GM10248 (cell line): ENCODE measurements at regions of chr9 and their contacts with region 1.

Region 1: DNA sequence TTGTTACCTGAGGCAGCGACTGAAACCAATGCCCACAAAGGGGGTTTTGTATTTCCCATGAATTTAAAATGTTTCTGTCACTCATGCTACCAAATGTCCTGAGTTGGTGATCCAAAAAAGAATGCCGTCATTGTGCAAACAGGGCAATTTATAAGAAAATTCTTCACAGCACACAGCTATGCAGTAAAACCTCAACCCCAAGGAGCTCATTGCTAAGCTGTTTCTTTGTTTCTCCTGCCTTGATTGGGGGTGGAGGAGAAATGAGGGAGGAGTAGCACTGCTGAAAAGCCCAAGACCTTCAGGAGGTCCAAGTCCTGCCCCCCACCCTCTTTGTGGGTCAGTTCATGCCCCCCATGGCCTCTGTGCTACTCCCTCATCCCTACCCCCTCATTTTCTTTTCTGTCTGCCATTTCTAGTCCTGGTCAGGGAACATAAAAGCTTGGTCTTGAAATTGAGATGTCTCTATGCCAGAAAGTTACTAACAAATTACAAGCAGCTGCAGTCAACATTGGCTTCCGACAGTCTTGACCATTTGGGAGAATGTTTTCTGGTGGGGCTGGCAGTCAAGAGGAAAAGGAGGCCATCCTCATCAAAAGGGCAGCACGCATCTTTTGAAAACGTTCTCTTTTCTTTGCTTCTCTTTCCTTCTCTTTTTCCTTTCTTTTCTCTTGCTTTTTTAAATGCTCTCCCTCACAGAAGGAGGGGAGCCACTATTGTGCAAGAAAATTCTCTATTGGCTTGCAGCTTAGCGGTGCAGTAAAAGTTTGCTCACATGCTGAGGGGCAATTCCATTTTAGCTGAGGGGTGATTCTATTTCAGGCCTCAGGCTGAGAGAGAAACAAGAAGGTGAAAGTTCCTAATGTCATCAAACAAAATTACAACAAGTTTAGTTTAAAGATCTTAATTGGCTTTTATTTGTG is 133.4 kb downstream of the GCNT1 start:
- DNase-seq: no peak
- CTCF ChIP-seq: no peak

Region 2: DNA sequence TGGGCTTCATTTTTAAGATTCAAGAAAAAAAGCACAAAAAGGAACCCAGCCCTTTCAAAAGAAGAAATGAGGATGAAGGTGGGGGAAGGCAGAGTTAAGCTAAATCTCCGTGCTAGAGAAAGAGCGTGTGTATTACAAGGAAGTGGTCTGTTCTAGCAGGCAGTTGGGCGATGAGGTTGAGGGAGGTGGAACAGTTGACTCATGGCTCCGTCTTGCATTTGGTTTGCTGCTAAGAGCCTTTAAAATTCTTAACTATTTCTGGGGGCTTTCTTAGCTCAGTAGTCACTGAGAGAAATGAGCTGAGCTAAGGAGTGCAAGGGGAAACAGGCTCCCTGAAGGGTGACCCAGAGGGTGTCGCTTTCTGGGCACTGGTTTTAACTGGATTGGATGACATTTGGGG is 16.0 kb before region 1 on chr9:
- CTCF ChIA-PET with region 1: interaction called, 12 read pairs
- POLR2A ChIA-PET with region 1: no interaction called
- DNase-seq: peak; percentile 76
- CTCF ChIP-seq: no peak

Region 3: GRCh38 chr9:76610011-76610352 is 17.6 kb after region 1 on chr9:
- CTCF ChIA-PET with region 1: interaction called, 11 read pairs
- POLR2A ChIA-PET with region 1: interaction called, 10 read pairs
- DNase-seq: no peak
- CTCF ChIP-seq: no peak

Region 4: DNA sequence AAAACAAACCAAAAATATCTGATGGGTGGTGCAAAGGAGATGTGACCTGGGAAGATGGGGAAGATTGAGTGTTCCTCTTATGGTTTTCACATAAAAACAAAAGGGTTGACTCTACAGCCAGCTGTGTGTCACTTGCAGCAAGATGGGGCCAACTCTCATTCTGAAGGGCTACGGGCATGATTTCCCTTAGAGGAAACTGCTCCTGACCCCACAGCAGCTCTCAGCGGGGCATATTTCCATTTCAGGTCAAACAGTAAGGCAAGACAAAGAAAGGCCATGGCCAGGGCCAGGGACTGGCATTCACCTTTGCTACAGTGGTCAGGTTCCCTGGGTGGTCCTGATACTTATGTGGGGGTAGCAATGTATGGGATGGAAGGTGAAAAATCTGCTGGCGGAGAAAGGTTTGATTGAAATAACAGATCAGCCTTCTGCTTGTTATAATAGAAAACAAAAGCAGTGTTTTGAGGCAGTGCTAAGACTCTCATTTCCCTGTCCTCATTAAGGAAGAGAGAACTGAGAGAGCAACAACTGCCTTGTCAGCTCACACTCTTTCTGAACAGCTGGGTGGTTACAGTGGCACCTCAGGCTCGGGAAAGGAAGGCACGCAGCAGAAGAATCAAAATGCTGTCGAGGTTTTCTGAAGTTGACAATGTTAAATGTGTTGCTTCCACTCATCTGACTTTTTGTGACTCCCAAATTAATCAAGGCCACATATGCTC is 51.2 kb after region 1 on chr9:
- CTCF ChIA-PET with region 1: no interaction called
- POLR2A ChIA-PET with region 1: no interaction called
- DNase-seq: peak; percentile 49
- CTCF ChIP-seq: no peak

Region 5: GRCh38 chr9:76687861-76688391 is 95.6 kb after region 1 on chr9:
- CTCF ChIA-PET with region 1: no interaction called
- POLR2A ChIA-PET with region 1: no interaction called
- DNase-seq: no peak
- CTCF ChIP-seq: no peak